Activated CD4-positive, alpha-beta T cell treated with anti-CD3 and anti-CD28 coated beads, Interleukin-2, amount 10 ng/mL, durations not matched to agents 7 days and 5 days (primary cell): ENCODE measurements at regions of chr7 and their contacts with region 1.

Region 1: GRCh38 chr7:44638611-44639557 is 32.5 kb downstream of the OGDH start:
- DNase-seq: peak; percentile 89
- H3K4me3 Mint-ChIP-seq: peak overlapping the region; percentile 74
- H3K27ac Mint-ChIP-seq: peak overlapping the region; percentile 99
- H3K4me1 Mint-ChIP-seq: peaks cover 77% of the 10 kb centered on the region
- H3K27me3 Mint-ChIP-seq: no peaks in the 10 kb centered on the region

Region 2: GRCh38 chr7:44606450-44607254 is 32.2 kb before region 1 on chr7 and contains the start of gene OGDH:
- CTCF ChIA-PET with region 1: interaction called, 17 read pairs
- POLR2A ChIA-PET with region 1: interaction called, 7 read pairs
- DNase-seq: peak; percentile 100
- H3K4me3 Mint-ChIP-seq: peak within 1 kb of the TSS; percentile 91
- H3K27ac Mint-ChIP-seq: peak within 1 kb of the TSS; percentile 99
- H3K4me1 Mint-ChIP-seq: peaks cover 45% of the 10 kb centered on the region
- H3K27me3 Mint-ChIP-seq: peaks cover 3% of the 10 kb centered on the region
- total RNA-seq, gene OGDH: 114 to 121 TPM

Region 3: DNA sequence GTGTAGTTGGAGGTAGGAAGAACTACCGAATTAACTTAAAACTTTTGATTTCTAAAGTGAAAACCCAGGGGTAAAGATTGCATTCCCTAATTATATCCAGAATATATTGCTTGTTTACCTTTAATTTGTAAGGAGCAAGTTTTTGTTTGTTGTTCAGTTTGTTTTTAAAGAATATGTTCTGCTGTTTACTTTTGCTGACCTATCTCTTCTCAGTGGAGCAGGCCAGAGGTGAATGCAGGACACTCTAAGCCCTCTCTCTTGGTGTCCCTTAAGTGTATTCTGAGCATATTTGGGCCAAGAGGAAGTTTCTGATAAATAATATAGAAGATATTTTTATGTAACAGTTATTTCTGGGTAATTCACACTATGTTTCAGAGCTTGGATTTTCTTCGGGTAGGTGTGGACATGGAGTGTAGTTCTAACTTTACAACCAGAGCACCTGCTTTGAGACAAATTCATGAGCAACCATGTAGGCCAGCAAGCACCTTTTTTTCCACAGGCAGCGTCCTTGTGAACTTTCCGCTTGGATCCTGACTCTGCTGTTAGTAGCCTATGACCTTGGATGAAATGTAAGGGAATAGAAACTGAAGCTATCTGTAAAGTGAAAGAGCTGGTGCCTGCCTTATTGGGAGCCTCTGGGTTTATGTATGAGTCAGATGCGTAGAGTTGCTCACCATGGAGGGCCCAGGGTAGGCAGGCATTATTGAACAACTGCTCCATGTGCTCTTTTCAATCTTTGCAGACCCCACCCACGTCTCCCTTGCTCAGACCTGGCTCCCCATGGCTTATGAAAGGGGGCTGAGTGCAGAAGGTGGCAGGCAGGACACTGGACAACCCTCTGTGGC is 16.4 kb before region 1 on chr7:
- CTCF ChIA-PET with region 1: interaction called, 43 read pairs
- POLR2A ChIA-PET with region 1: interaction called, 3 read pairs
- DNase-seq: peak; percentile 53
- H3K4me3 Mint-ChIP-seq: peak overlapping the region; percentile 30
- H3K27ac Mint-ChIP-seq: peak overlapping the region; percentile 93
- H3K4me1 Mint-ChIP-seq: peaks cover 91% of the 10 kb centered on the region
- H3K27me3 Mint-ChIP-seq: no peaks in the 10 kb centered on the region

Region 4: DNA sequence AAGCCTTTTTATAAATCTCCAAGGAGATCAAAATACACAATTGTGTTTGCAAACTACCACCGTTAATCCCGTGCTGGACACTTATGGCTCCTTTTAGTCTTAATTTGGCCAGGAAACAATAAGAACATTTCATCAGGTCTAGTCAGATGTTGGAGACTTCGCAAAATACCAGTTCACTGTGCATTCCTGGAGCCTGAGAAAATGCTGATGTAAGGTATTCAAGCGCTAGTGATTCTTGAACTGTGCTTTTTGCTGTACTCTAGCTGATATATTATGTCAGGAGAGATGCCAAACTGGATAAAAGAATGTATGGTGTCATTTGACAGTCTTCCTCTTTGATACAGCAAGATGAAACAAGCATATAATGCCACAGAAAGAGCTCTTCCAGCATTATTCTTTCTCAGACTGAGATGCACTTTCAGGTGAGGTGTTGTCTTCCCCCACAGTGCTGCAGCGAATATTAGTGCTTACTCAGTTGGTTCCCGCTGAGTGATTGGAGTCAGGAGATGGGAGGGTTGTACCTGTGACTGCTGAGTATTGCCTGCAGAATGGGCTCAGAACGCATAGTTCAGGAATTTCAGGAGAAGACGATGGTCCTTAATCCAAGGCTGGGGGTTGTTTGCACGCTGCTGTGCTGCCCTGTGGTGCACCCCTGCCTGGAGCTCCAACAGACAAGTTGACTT is 26.8 kb after region 1 on chr7:
- CTCF ChIA-PET with region 1: no interaction called
- POLR2A ChIA-PET with region 1: no interaction called
- DNase-seq: no peak
- H3K4me3 Mint-ChIP-seq: no peak overlapping the region
- H3K27ac Mint-ChIP-seq: no peak overlapping the region
- H3K4me1 Mint-ChIP-seq: peaks cover 6% of the 10 kb centered on the region
- H3K27me3 Mint-ChIP-seq: no peaks in the 10 kb centered on the region